Activated B cell treated with CpG ODN at 0.5 μM for 24 hours (primary cell): ENCODE measurements at regions of chr19 and their contacts with region 1.

Region 1: DNA sequence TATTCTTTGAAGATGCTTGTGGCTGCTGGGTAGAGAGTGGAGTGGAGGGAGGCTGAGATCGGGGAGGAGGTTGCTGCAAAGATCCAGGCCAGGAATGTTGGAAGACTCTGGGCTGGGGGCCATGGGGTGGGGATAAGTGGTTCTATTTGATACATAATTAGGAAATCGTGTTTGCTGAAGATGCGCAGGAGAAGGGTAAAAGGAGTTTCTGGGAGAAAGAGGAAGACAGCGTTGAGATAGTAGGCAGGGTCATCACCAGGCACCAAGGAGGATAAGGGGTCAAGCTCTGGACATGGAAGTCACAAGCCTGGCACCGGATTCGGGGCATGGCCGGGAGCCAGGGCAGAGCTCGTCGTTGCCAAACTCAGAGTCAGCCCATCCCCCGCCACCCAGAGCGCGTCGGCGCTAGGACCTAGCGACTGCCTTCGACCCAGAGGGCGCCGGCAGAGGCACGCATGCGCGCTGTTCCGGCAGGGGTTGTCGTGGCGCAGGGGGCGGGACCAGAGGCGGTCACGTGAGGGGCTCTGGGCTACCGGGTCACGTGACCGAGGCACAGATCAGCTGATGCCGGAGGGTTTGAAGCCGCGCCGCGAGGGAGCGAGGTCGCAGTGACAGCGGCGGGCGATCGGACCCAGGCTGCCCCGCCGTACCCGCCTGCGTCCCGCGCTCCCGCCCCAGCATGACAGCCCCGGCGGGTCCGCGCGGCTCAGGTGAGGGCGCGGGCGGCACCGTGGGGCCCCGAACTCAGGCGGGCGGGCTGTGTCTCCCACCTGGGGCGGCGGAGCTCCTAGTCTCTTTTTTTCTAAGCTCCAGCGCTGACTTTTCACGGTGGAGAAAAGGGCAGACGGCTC is at the start of gene MCOLN1:
- DNase-seq: peak; percentile 99
- ATAC-seq: peak; percentile 91
- H3K4me3 Mint-ChIP-seq: peak within 1 kb of the TSS; percentile 81
- H3K27ac Mint-ChIP-seq: peak within 1 kb of the TSS; percentile 74
- H3K4me1 Mint-ChIP-seq: peaks cover 17% of the 10 kb centered on the region
- H3K27me3 Mint-ChIP-seq: no peaks in the 10 kb centered on the region
- CTCF ChIP-seq: no peak
- total RNA-seq, gene MCOLN1: 13.4 and 13.7 TPM in 2 replicates

Region 2: GRCh38 chr19:7442423-7442822 is 79.9 kb before region 1 on chr19:
- CTCF ChIA-PET with region 1: no interaction called
- POLR2A ChIA-PET with region 1: interaction called, 10 read pairs
- intact Hi-C with region 1: no loop called
- DNase-seq: no peak
- ATAC-seq: no peak
- H3K4me3 Mint-ChIP-seq: no peak overlapping the region
- H3K27ac Mint-ChIP-seq: peak overlapping the region; percentile 30
- H3K4me1 Mint-ChIP-seq: no peaks in the 10 kb centered on the region
- H3K27me3 Mint-ChIP-seq: no peaks in the 10 kb centered on the region
- CTCF ChIP-seq: no peak

Region 3: GRCh38 chr19:7471696-7472615 is 50.3 kb before region 1 on chr19:
- CTCF ChIA-PET with region 1: no interaction called
- POLR2A ChIA-PET with region 1: no interaction called
- intact Hi-C with region 1: loop called (anchors 5 kb)
- DNase-seq: no peak
- ATAC-seq: no peak
- H3K4me3 Mint-ChIP-seq: no peak overlapping the region
- H3K27ac Mint-ChIP-seq: peak overlapping the region; percentile 90
- H3K4me1 Mint-ChIP-seq: peaks cover 24% of the 10 kb centered on the region
- H3K27me3 Mint-ChIP-seq: no peaks in the 10 kb centered on the region
- CTCF ChIP-seq: no peak

Region 4: DNA sequence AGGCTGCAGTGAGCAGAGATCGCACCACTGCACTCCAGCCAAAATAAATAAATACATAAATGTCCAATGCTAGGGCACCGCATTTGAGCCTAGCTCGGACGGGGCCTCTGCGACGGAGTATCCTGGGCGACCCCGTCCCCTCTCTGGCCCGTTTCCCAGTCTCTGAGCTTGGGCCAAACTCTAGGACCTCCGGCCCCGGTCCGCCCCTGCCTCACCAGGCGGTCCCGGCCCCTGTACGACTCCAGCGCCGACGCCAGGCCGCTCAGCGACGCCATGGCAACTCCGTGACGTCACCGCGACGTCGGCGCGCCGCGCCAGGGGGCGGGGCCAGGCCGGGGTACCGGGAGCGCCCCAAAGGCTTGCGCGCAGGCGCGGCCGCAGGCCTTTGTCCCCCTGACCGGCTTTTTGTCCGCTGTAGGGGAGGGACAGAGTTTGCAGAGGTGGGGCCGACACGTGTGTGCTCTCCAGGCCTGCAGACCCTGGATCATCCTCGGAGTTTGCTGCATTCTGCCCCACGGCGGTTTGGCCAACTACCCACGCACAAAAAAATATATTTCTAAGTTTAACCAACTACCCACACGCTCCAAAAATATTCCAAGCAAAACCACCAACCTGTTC is 33.5 kb before region 1 on chr19 and contains the start of gene PEX11G:
- CTCF ChIA-PET with region 1: no interaction called
- POLR2A ChIA-PET with region 1: interaction called, 3 read pairs
- intact Hi-C with region 1: loop called (anchors 2 kb)
- DNase-seq: peak; percentile 98
- ATAC-seq: peak; percentile 99
- H3K4me3 Mint-ChIP-seq: peak within 1 kb of the TSS; percentile 79
- H3K27ac Mint-ChIP-seq: peak within 1 kb of the TSS; percentile 69
- H3K4me1 Mint-ChIP-seq: peaks cover 10% of the 10 kb centered on the region
- H3K27me3 Mint-ChIP-seq: peaks cover 3% of the 10 kb centered on the region
- CTCF ChIP-seq: no peak
- total RNA-seq, gene PEX11G: 0.61 and 1.0 TPM in 2 replicates

Region 5: DNA sequence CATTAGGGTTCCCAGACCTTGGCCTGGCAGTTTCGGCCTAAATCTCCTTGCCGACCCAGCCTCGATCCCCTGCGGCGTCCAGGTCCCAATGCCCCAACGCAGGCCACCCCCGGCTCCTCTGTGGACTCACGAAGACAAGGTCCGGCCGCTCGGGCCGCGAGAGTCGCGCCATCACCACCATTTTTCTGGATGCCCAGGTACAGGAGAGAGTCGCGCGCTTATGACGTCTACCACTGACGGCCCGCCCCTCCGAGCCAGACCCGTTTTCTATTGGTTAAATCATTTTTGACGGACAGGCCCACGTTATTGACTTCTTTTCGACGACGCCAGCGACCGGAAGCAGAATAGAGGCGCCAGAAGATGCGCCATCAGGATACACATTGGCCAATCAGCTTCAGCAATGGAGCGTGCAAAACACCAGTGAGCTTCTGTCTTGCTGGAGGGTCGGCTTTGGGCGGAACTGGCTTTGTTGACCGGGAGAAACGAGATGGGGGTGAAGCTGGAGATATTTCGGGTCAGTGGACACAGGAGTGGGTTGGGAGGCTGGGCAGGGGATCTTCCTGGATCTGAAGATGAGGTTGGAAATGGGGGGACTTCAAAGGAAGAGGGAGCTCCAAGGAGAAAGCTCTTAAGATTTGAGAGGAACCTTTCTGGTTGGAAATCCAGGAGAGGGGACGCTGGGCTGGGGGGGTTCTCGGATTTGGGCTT is 107.2 kb after region 1 on chr19 and contains the starts of genes PET100 and XAB2:
- CTCF ChIA-PET with region 1: no interaction called
- POLR2A ChIA-PET with region 1: interaction called, 10 read pairs
- intact Hi-C with region 1: no loop called
- DNase-seq: peak; percentile 88
- ATAC-seq: peak; percentile 98
- H3K4me3 Mint-ChIP-seq: peak within 1 kb of the TSS; percentile 98
- H3K27ac Mint-ChIP-seq: peak within 1 kb of the TSS; percentile 98
- H3K4me1 Mint-ChIP-seq: peaks cover 37% of the 10 kb centered on the region
- H3K27me3 Mint-ChIP-seq: no peaks in the 10 kb centered on the region
- CTCF ChIP-seq: no peak
- total RNA-seq, gene PET100: 109 and 123 TPM in 2 replicates
- total RNA-seq, gene XAB2: 47.4 and 51.8 TPM in 2 replicates

Region 6: GRCh38 chr19:7815325-7815724 is 293.0 kb after region 1 on chr19:
- CTCF ChIA-PET with region 1: no interaction called
- POLR2A ChIA-PET with region 1: no interaction called
- intact Hi-C with region 1: no loop called
- DNase-seq: peak; percentile 35
- ATAC-seq: peak; percentile 77
- H3K4me3 Mint-ChIP-seq: peak overlapping the region; percentile 71
- H3K27ac Mint-ChIP-seq: peak overlapping the region; percentile 76
- H3K4me1 Mint-ChIP-seq: peaks cover 37% of the 10 kb centered on the region
- H3K27me3 Mint-ChIP-seq: peaks cover 5% of the 10 kb centered on the region
- CTCF ChIP-seq: no peak